ENCODE measurements at regions of chr9 and their contacts with region 1.

Region 1: GRCh38 chr9:129495534-129496325 is 125.2 kb downstream of the C9orf50 start:
- DNase-seq: peak; percentile 97

Region 2: GRCh38 chr9:129174085-129174723 is 321.5 kb before region 1 on chr9:
- intact Hi-C with region 1: loop called (anchors 2 kb)
- DNase-seq: peak; percentile 95

Region 3: GRCh38 chr9:129460323-129461261 is 35.1 kb before region 1 on chr9:
- intact Hi-C with region 1: loop called (anchors 1 kb)
- DNase-seq: peak; percentile 100

Region 4: GRCh38 chr9:129569502-129570449 is 74.0 kb after region 1 on chr9:
- intact Hi-C with region 1: loop called (anchors 2 kb)
- DNase-seq: no peak